ENCODE measurements at regions of chr2 and their contacts with region 1.

Region 1: GRCh38 chr2:222842491-222843174 is 18.2 kb upstream of the ACSL3 start:
- DNase-seq: no peak
- H3K4me3 ChIP-seq: no peak overlapping the region
- H3K27ac ChIP-seq: peak overlapping the region; percentile 22 to 59 (median 40)
- H3K4me1 ChIP-seq: peaks cover 0 to 11% (median 4%) of the 10 kb centered on the region in 4 donors
- H3K27me3 ChIP-seq: no peaks in the 10 kb centered on the region
- CTCF ChIP-seq: no peak
- EP300 ChIP-seq: no peak
- POLR2A ChIP-seq: no peak

Region 2: GRCh38 chr2:222872551-222872950 is 29.9 kb after region 1 on chr2:
- in situ Hi-C with region 1: no loop called
- intact Hi-C with region 1: loop called (anchors 1 kb)
- DNase-seq: no peak
- H3K4me3 ChIP-seq: no peak overlapping the region
- H3K27ac ChIP-seq: no peak overlapping the region
- H3K4me1 ChIP-seq: peaks cover 6 to 45% (median 16%) of the 10 kb centered on the region in 4 donors
- H3K27me3 ChIP-seq: no peaks in the 10 kb centered on the region
- CTCF ChIP-seq: no peak
- EP300 ChIP-seq: no peak
- POLR2A ChIP-seq: no peak